GM12878 (cell line): ENCODE measurements at regions of chr7 and their contacts with region 1.

Region 1: GRCh38 chr7:5231811-5232484 is 41.9 kb downstream of the WIPI2 start:
- DNase-seq: peak; percentile 93
- ATAC-seq: peak; percentile 77
- H3K4me3 ChIP-seq: peak overlapping the region; percentile 35
- H3K27ac ChIP-seq: peak overlapping the region; percentile 99
- H3K4me1 ChIP-seq: peaks cover 68% of the 10 kb centered on the region
- H3K27me3 ChIP-seq: no peaks in the 10 kb centered on the region
- CTCF ChIP-seq: peak in 1 of 3 experiments; percentile 46; a peak in 1 of 6 replicates
- EP300 ChIP-seq: peak; percentile 94 to 97
- POLR2A ChIP-seq: peak; percentile 46; the same call in 1 of the 2 replicates
- RAD21 ChIP-seq: no peak

Region 2: DNA sequence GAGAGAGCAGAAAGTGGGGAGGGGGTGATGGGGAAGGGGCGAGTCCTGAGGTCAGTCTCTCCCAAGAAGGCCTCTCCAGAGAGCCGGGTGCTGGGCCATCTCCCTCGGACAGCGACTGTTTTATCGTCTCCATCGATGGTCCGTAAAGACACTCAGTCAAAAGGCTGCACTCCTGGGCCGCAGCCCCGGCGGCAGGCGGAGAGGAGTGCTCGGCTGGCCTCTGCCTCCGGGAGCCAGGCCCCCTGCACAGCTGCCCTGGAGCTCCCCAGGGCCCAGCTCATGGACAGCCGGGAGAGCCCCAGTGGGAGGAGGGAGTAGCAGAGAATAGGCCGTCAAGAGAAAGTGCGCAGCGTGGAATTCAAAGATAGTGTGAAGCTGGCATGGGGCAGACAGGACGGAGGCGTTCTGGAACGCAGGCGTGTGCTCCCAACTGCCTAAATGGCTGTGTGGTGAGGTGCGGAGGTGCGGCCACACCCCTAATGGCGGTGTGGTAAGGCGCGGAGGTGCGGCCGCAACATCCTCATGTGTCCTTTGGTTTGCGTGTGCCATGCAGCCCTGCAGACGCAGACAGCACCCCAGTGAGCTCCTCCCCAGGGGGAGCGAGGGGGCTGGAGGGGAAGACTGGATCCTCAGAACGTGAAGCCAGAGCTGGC is 1027.3 kb before region 1 on chr7:
- CTCF ChIA-PET with region 1: no interaction called
- POLR2A ChIA-PET with region 1: no interaction called
- RAD21 ChIA-PET with region 1: no interaction called
- SMC1A ChIA-PET with region 1: no interaction called
- in situ Hi-C with region 1: no loop called
- intact Hi-C with region 1: no loop called
- DNase-seq: no peak
- ATAC-seq: no peak
- H3K4me3 ChIP-seq: no peak overlapping the region
- H3K27ac ChIP-seq: no peak overlapping the region
- H3K4me1 ChIP-seq: no peaks in the 10 kb centered on the region
- H3K27me3 ChIP-seq: no peaks in the 10 kb centered on the region
- CTCF ChIP-seq: no peak
- EP300 ChIP-seq: no peak
- POLR2A ChIP-seq: no peak
- RAD21 ChIP-seq: no peak

Region 3: GRCh38 chr7:5206686-5207085 is 25.3 kb before region 1 on chr7:
- CTCF ChIA-PET with region 1: interaction called, 5 read pairs
- POLR2A ChIA-PET with region 1: interaction called, 5 read pairs
- RAD21 ChIA-PET with region 1: interaction called, 10 read pairs
- SMC1A ChIA-PET with region 1: interaction called, 17 read pairs
- in situ Hi-C with region 1: no loop called
- intact Hi-C with region 1: no loop called
- DNase-seq: no peak
- ATAC-seq: peak; percentile 15; the same call in 1 of the 3 replicates
- H3K4me3 ChIP-seq: no peak overlapping the region
- H3K27ac ChIP-seq: no peak overlapping the region; the same call in 1 of the 2 replicates
- H3K4me1 ChIP-seq: no peaks in the 10 kb centered on the region
- H3K27me3 ChIP-seq: no peaks in the 10 kb centered on the region
- CTCF ChIP-seq: no peak
- EP300 ChIP-seq: no peak
- POLR2A ChIP-seq: no peak
- RAD21 ChIP-seq: no peak

Region 4: GRCh38 chr7:5333121-5334045 is 101.4 kb after region 1 on chr7:
- CTCF ChIA-PET with region 1: no interaction called
- POLR2A ChIA-PET with region 1: interaction called, 4 read pairs
- RAD21 ChIA-PET with region 1: interaction called, 3 read pairs
- SMC1A ChIA-PET with region 1: interaction called, 4 read pairs
- in situ Hi-C with region 1: no loop called
- intact Hi-C with region 1: loop called (anchors 5 kb)
- DNase-seq: no peak
- ATAC-seq: peak; percentile 57
- H3K4me3 ChIP-seq: no peak overlapping the region
- H3K27ac ChIP-seq: no peak overlapping the region
- H3K4me1 ChIP-seq: peaks cover 23% of the 10 kb centered on the region
- H3K27me3 ChIP-seq: no peaks in the 10 kb centered on the region
- CTCF ChIP-seq: no peak
- EP300 ChIP-seq: no peak
- POLR2A ChIP-seq: no peak
- RAD21 ChIP-seq: no peak

Region 5: GRCh38 chr7:5450549-5451372 is 218.8 kb after region 1 on chr7:
- CTCF ChIA-PET with region 1: interaction called, 8 read pairs
- POLR2A ChIA-PET with region 1: no interaction called
- RAD21 ChIA-PET with region 1: interaction called, 13 read pairs
- SMC1A ChIA-PET with region 1: no interaction called
- in situ Hi-C with region 1: no loop called
- intact Hi-C with region 1: no loop called
- DNase-seq: no peak
- ATAC-seq: peak; percentile 92
- H3K4me3 ChIP-seq: no peak overlapping the region
- H3K27ac ChIP-seq: no peak overlapping the region
- H3K4me1 ChIP-seq: no peaks in the 10 kb centered on the region
- H3K27me3 ChIP-seq: no peaks in the 10 kb centered on the region; a peak in 1 of 4 replicates
- CTCF ChIP-seq: peak; percentile 48 to 70 (median 61)
- EP300 ChIP-seq: no peak
- POLR2A ChIP-seq: no peak
- RAD21 ChIP-seq: peak; percentile 74